ENCODE measurements at regions of chr11 and their contacts with region 1.

Region 1: DNA sequence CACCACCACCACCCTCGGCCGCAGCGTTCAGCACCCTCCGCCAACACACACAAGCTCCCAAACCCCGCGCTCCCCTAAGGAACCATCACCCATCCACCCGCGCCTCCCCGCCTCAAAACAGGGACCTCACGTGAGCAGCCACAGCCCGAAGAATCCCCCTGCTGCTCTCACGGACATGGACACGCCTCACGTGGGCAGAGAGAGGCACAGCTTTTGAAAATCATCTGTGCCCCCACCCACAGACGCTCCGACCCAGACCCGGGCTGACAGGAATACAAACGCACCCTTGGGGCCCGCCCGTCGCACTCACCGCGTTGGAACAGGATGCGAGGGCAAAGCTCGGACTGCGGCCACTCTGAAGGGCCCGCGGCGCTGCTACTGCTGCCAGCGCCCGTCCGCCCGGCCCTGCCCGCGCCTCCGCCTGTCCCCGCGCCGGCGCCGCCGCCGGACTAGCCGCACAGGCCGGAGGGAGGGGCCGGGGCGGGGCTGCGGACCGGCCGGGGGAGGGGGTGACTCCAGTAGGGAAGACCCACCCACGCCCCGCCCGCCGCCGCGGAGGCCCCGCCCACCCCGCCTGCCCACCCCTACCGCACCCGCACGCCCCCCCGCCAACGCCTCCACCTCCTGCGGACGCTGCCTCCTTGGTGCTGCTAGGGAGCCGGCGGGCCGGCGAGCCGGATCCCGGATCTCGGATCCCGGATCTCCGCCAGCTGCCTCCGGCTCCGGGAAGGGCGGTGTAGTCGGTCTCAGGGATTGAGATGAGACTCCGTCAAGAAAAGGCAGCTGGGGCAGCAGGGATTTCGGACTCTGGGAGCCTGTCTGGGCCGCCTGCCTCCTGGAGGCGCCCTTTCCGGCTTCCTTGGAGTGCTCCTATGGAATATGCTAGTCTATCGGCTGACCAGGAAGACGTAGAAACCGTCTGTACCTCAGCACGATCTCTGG is at the start of gene TRIM3:
- DNase-seq: peak; percentile 97
- H3K4me3 ChIP-seq: peak within 1 kb of the TSS; percentile 74 to 85 (median 82)
- H3K27ac ChIP-seq: peak within 1 kb of the TSS; percentile 88 to 98 (median 96)
- H3K4me1 ChIP-seq: peaks cover 0 to 40% (median 33%) of the 10 kb centered on the region in 4 donors
- H3K27me3 ChIP-seq: no peaks in the 10 kb centered on the region
- CTCF ChIP-seq: no peak
- EP300 ChIP-seq: no peak
- POLR2A ChIP-seq: peak; percentile 65 to 66
- total RNA-seq, gene TRIM3: 19.8 to 27.1 (median 24.4) TPM

Region 2: GRCh38 chr11:5684646-5685362 is 788.9 kb before region 1 on chr11 and contains the start of gene TRIM5:
- intact Hi-C with region 1: loop called (anchors 10 kb)
- DNase-seq: peak; percentile 95
- H3K4me3 ChIP-seq: peak within 1 kb of the TSS; percentile 24 to 53 (median 49)
- H3K27ac ChIP-seq: peak within 1 kb of the TSS; percentile 89 to 93 (median 90)
- H3K4me1 ChIP-seq: peaks cover 0 to 35% (median 26%) of the 10 kb centered on the region in 4 donors
- H3K27me3 ChIP-seq: no peaks in the 10 kb centered on the region
- CTCF ChIP-seq: peak; percentile 20 to 56 (median 50)
- EP300 ChIP-seq: no peak
- POLR2A ChIP-seq: peak in 1 of 2 donors; percentile 31
- total RNA-seq, gene TRIM5: 11.7 to 29.9 (median 14.3) TPM

Region 3: GRCh38 chr11:6234387-6235107 is 239.2 kb before region 1 on chr11 and contains the start of gene FHIP1B:
- intact Hi-C with region 1: loop called (anchors 5 kb)
- DNase-seq: peak; percentile 100
- H3K4me3 ChIP-seq: peak within 1 kb of the TSS; percentile 48 to 90 (median 70)
- H3K27ac ChIP-seq: peak within 1 kb of the TSS; percentile 85 to 91 (median 87)
- H3K4me1 ChIP-seq: peaks cover 0 to 27% (median 15%) of the 10 kb centered on the region in 4 donors
- H3K27me3 ChIP-seq: no peaks in the 10 kb centered on the region
- CTCF ChIP-seq: no peak
- EP300 ChIP-seq: no peak
- POLR2A ChIP-seq: peak; percentile 16 to 47
- total RNA-seq, gene FHIP1B: 21.6 to 66.0 (median 36.6) TPM

Region 4: GRCh38 chr11:6419009-6419631 is 54.6 kb before region 1 on chr11 and contains the start of gene APBB1:
- intact Hi-C with region 1: loop called (anchors 5 kb)
- DNase-seq: peak; percentile 82
- H3K4me3 ChIP-seq: peak within 1 kb of the TSS; percentile 79 to 99 (median 89)
- H3K27ac ChIP-seq: peak within 1 kb of the TSS; percentile 86 to 98 (median 94)
- H3K4me1 ChIP-seq: peaks cover 0 to 35% (median 24%) of the 10 kb centered on the region in 4 donors
- H3K27me3 ChIP-seq: no peaks in the 10 kb centered on the region
- CTCF ChIP-seq: peak in 2 of 4 experiments; percentile 14 to 17
- EP300 ChIP-seq: no peak
- POLR2A ChIP-seq: no peak
- total RNA-seq, gene APBB1: 51.0 to 85.0 (median 61.7) TPM

Measured in sigmoid colon (tissue), 7 donors.